ENCODE measurements at regions of chr18 and their contacts with region 1.

Region 1: GRCh38 chr18:77000527-77000926 is 132.1 kb downstream of the MBP start:
- DNase-seq: peak in 27 of 35 experiments; percentile 12 to 75 (median 40)
- ATAC-seq: no peak
- H3K4me3 ChIP-seq: no peak overlapping the region
- H3K4me3 Mint-ChIP-seq: no peak overlapping the region
- H3K27ac ChIP-seq: no peak overlapping the region
- H3K27ac Mint-ChIP-seq: no peak overlapping the region
- H3K4me1 ChIP-seq: peaks cover 4 to 18% of the 10 kb centered on the region in 2 experiments
- H3K4me1 Mint-ChIP-seq: peaks cover 25 to 30% (median 26%) of the 10 kb centered on the region in 3 donors
- H3K27me3 ChIP-seq: peaks cover 0 to 5% of the 10 kb centered on the region in 2 experiments
- H3K27me3 Mint-ChIP-seq: no peaks in the 10 kb centered on the region

Region 2: GRCh38 chr18:75226286-75226955 is 1774.1 kb before region 1 on chr18:
- CTCF ChIA-PET with region 1: no interaction called
- POLR2A ChIA-PET with region 1: no interaction called
- DNase-seq: no peak
- ATAC-seq: peak in 2 of 4 experiments; percentile 29 to 44
- H3K4me3 ChIP-seq: peak overlapping the region in 1 of 2 donors; percentile 15
- H3K4me3 Mint-ChIP-seq: peak overlapping the region; percentile 32 to 61 (median 53)
- H3K27ac ChIP-seq: no peak overlapping the region
- H3K27ac Mint-ChIP-seq: peak overlapping the region; percentile 19 to 84
- H3K4me1 ChIP-seq: peaks cover 18 to 34% of the 10 kb centered on the region in 2 experiments
- H3K4me1 Mint-ChIP-seq: peaks cover 79 to 86% (median 84%) of the 10 kb centered on the region in 3 donors
- H3K27me3 ChIP-seq: no peaks in the 10 kb centered on the region
- H3K27me3 Mint-ChIP-seq: no peaks in the 10 kb centered on the region

Region 3: DNA sequence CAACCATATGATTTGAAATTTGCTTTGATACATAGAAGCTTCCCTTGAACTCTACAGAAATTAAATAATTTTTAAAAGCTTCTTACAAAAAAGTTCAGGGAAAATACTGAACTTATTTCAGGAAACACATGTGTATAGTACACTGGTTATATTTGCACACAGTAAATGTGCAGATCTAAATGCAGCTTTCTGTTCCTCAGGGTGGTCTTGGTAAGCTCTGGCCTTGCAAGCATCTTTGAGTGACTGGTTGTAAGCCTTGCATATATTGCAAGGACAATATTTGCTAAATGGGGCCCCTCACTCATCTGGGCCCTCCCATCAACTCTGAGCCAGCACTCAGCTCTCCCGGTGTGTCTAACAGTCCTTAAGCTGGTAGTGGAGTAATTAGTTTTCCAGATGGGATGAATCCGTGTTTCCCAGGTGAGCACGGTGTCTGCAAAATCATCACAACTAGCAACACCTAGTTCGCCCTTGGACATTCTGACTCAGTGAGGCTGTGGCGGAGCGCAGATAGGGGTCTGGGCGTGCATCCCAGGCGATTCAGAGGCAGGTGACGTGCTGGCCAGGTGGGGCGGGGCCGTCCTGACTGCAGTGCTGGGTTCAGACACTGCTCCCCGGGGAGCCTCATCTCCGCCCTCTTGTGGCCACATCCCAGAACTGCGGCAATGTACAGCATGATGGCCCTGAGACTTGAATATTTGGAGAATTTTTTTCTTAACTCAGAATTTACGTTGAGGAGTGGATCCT is 17.5 kb before region 1 on chr18:
- CTCF ChIA-PET with region 1: interaction called, 8 to 14 read pairs
- POLR2A ChIA-PET with region 1: no interaction called
- DNase-seq: peak; percentile 59 to 87 (median 80)
- ATAC-seq: peak; percentile 91 to 96 (median 96)
- H3K4me3 ChIP-seq: no peak overlapping the region
- H3K4me3 Mint-ChIP-seq: no peak overlapping the region
- H3K27ac ChIP-seq: no peak overlapping the region
- H3K27ac Mint-ChIP-seq: no peak overlapping the region
- H3K4me1 ChIP-seq: peaks cover 2 to 11% of the 10 kb centered on the region in 2 experiments
- H3K4me1 Mint-ChIP-seq: peaks cover 8 to 11% (median 8%) of the 10 kb centered on the region in 3 donors
- H3K27me3 ChIP-seq: no peaks in the 10 kb centered on the region
- H3K27me3 Mint-ChIP-seq: no peaks in the 10 kb centered on the region

Region 4: GRCh38 chr18:77054606-77055428 is 54.3 kb after region 1 on chr18:
- CTCF ChIA-PET with region 1: interaction called, 9 to 12 read pairs
- POLR2A ChIA-PET with region 1: interaction called in 1 of 2 experiments, 3 read pairs
- DNase-seq: peak; percentile 62 to 91 (median 81)
- ATAC-seq: peak; percentile 87 to 90 (median 88)
- H3K4me3 ChIP-seq: peak overlapping the region; percentile 8 to 56
- H3K4me3 Mint-ChIP-seq: peak overlapping the region; percentile 61 to 64 (median 62)
- H3K27ac ChIP-seq: peak overlapping the region; percentile 83
- H3K27ac Mint-ChIP-seq: peak overlapping the region; percentile 91 to 95
- H3K4me1 ChIP-seq: peaks cover 36 to 80% of the 10 kb centered on the region in 2 experiments
- H3K4me1 Mint-ChIP-seq: peaks cover 66 to 80% (median 73%) of the 10 kb centered on the region in 3 donors
- H3K27me3 ChIP-seq: no peaks in the 10 kb centered on the region
- H3K27me3 Mint-ChIP-seq: no peaks in the 10 kb centered on the region

Region 5: GRCh38 chr18:77207540-77207939 is 207.0 kb after region 1 on chr18:
- CTCF ChIA-PET with region 1: interaction called, 6 to 16 read pairs
- POLR2A ChIA-PET with region 1: no interaction called
- DNase-seq: peak in 34 of 35 experiments; percentile 22 to 77 (median 55)
- ATAC-seq: peak; percentile 76 to 91 (median 88)
- H3K4me3 ChIP-seq: no peak overlapping the region
- H3K4me3 Mint-ChIP-seq: peak overlapping the region; percentile 64 to 71 (median 69)
- H3K27ac ChIP-seq: no peak overlapping the region
- H3K27ac Mint-ChIP-seq: peak overlapping the region; percentile 88 to 89
- H3K4me1 ChIP-seq: peaks cover 9 to 36% of the 10 kb centered on the region in 2 experiments
- H3K4me1 Mint-ChIP-seq: peaks cover 47 to 52% (median 48%) of the 10 kb centered on the region in 3 donors
- H3K27me3 ChIP-seq: peaks cover 0 to 2% of the 10 kb centered on the region in 2 experiments
- H3K27me3 Mint-ChIP-seq: peaks cover 0 to 3% of the 10 kb centered on the region in 2 donors

Measured in T-cell (primary cell).